Right ventricle myocardium superior (tissue), 1 donor: ENCODE measurements at regions of chr7 and their contacts with region 1.

Region 1: DNA sequence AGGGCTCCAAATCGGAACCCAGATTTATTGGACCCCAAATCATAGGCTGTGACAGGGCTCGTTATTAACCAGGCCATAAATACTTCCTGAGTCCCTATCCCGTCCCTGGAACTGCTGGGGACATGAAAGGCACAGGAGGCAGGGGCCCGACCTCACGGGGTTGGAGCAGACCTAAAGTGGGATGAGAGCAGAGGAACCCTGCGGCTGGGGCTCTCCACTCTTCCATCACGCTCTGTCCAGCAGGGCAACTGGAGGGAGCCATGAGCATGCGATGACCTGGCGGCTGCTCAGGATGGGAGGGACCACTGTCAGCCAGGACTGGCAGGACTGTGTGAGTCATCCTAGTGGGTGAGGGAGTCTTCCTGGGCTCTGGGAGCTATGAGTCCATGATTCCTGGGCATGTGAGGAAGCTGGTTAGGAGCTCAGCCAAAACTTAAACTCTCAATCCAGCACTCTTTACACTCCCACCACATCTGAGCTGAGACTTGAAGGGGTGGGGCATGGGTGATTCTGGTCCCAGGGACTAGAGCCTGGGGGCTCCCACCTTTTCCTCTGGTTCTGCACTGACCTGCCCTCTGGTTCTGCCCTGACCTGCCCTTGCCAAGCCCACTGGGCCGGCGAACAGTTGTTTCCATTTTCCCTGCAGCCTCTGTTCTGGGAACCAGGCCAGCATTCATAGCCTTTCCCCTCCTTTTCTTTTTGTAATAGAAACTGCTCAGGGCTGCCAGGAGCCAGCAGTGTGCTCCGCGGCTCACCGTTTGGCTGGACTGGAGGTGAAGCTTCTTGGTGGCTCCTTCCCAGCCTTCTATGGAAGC is 47.1 kb downstream of the SYPL1 start:
- DNase-seq: peak; percentile 88
- ATAC-seq: peak; percentile 91

Region 2: GRCh38 chr7:106111655-106112116 is 46.7 kb after region 1 on chr7:
- intact Hi-C with region 1: loop called (anchors 2 kb)
- DNase-seq: peak; percentile 85
- ATAC-seq: peak; percentile 86

Region 3: GRCh38 chr7:106166655-106167342 is 101.8 kb after region 1 on chr7:
- intact Hi-C with region 1: no loop called
- DNase-seq: no peak
- ATAC-seq: peak; percentile 85